ENCODE measurements at regions of chr5 and their contacts with region 1.

Region 1: GRCh38 chr5:164306662-164307061 is 801.2 kb downstream of the MAT2B start:
- DNase-seq: no peak
- ATAC-seq: no peak
- H3K4me3 ChIP-seq: no peak overlapping the region
- H3K27ac ChIP-seq: no peak overlapping the region
- H3K4me1 ChIP-seq: no peaks in the 10 kb centered on the region
- H3K27me3 ChIP-seq: no peaks in the 10 kb centered on the region
- CTCF ChIP-seq: no peak
- EP300 ChIP-seq: no peak
- POLR2A ChIP-seq: no peak
- RAD21 ChIP-seq: no peak

Region 2: GRCh38 chr5:164204338-164204946 is 102.2 kb before region 1 on chr5:
- CTCF ChIA-PET with region 1: no interaction called
- POLR2A ChIA-PET with region 1: no interaction called
- RAD21 ChIA-PET with region 1: no interaction called
- SMC1A ChIA-PET with region 1: no interaction called
- in situ Hi-C with region 1: no loop called
- intact Hi-C with region 1: no loop called
- DNase-seq: no peak
- ATAC-seq: no peak
- H3K4me3 ChIP-seq: no peak overlapping the region
- H3K27ac ChIP-seq: no peak overlapping the region
- H3K4me1 ChIP-seq: no peaks in the 10 kb centered on the region
- H3K27me3 ChIP-seq: no peaks in the 10 kb centered on the region
- CTCF ChIP-seq: no peak
- EP300 ChIP-seq: no peak
- POLR2A ChIP-seq: no peak
- RAD21 ChIP-seq: no peak

Region 3: DNA sequence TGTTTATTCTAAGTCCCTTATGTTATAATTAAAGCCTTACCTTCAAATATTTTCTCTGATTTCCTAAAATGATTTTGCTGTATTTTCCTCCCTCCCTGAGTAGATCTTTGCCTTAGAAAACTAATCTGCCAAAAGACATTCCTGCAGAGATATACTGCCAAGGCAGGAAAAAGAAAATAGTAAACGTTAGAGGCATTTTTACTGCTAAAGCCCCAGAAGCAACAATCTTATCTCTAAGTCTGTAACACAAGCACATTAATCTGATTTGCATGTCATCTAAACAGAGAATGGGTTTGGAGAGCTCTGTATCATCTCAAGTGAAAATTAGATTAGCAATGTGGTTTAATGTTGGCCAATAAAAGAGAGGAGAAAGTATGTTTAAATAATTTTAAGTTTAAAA is 46.5 kb after region 1 on chr5:
- CTCF ChIA-PET with region 1: no interaction called
- POLR2A ChIA-PET with region 1: interaction called, 4 read pairs
- RAD21 ChIA-PET with region 1: interaction called, 5 read pairs
- SMC1A ChIA-PET with region 1: interaction called, 12 read pairs
- in situ Hi-C with region 1: no loop called
- intact Hi-C with region 1: no loop called
- DNase-seq: no peak
- ATAC-seq: no peak
- H3K4me3 ChIP-seq: no peak overlapping the region
- H3K27ac ChIP-seq: no peak overlapping the region
- H3K4me1 ChIP-seq: no peaks in the 10 kb centered on the region
- H3K27me3 ChIP-seq: no peaks in the 10 kb centered on the region
- CTCF ChIP-seq: no peak
- EP300 ChIP-seq: no peak
- POLR2A ChIP-seq: no peak
- RAD21 ChIP-seq: no peak